Cardiac septum (tissue), 1 donor: ENCODE measurements at regions of chr5 and their contacts with region 1.

Region 1: DNA sequence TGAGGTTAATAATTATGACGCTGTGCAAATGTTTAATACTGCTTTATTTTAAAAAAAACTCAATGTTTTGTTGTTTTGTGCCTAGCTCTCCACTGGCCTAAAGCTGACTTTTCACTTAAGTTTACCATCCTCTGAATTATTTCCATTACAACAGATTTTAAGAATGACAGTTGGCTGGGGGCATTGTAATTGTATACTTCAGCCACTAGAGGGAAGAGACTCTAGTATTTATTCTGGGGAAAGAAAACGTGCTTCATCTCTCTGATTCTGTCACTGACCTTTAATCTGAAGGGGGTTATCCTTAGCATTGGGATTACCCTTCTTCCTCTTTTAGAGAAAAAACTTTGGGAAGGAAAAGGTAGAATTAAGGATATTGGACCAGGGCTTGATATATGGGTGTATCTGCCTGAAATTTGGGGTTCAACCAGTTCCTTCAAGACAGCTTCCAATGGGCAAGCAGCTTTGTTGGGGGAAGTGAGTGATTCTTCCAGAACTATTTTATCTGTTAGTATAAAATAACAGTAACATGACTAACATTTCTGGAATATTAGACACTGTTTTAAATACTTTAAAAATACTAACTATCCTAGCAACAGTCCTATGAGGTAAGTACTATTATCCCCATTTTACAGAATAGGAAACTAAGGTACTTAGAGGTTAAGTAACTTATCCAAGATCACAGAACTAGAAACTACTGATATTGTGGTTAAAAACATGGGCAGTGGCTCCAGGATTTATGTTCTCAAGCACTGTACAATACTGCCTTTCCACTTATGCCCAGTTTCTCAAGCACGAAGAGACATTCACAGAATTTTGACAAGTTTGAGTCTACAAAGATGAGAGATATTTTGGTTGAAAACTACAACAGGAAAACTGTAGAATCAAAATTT is 208.4 kb downstream of the CD180 start:
- DNase-seq: no peak

Region 2: DNA sequence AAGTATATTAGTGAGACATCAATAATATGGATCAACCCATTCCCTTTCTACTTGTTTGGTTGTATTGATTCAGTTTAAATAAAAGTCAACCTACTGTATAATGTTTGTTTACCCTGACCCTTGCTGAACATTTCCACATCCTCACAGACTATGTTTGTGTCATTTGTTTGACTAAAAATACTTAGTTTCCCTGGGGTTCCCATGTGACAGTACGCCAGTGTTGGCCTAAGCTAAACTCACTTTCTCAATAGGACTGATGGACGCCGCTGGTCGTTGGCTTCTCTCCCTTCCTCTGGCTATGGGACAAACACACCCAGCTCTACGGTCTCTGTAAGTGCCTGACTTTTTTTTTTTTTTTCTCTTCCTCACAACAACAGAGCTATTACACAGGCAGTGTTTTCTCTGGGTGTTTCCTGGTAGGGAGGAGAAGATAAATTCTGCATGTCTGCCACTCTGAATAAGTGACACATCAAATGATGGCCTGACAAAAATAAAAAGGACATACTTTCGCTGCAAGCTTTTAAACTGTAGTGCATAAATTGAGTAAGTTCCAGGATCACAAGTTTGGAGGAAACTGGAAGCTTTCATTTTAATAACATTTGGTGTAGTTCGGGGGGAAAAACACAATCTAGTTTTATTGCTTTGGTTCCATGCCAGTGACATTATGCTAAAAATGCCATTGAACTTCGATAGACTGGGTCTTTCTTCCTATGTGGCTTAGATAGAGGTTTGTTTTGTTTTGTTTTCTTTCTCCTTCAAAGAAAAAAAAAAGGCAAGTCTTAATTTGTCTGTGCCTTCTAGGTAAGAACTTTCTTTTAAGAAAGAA is 107.4 kb after region 1 on chr5:
- intact Hi-C with region 1: loop called (anchors 5 kb)
- DNase-seq: peak; percentile 81

Region 3: DNA sequence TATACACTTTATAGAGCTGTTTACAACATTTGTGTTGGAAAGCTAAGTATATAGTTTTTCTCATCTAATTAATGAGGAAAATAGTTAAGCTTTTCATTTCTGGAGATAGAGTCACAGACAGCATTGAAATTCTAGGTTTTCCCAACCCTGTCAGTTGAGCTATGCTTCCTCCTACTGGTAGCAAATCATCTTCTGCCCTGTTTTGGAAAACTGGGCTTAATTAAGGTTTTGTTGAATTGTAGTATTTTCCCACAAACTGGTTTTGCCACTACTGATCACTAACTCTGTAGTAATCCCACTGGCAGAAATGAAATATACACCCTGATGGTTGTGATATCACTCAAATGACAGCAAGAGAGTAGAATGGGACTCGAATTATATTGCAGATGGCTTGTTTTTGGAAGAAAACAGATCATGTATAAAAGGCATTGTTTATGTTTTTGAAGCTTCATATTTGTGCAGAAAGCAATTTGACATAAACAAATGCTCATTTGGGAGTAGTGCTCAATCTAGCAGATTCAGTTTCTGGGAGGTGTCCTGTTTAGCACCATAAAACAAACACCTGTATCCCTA is 161.8 kb after region 1 on chr5:
- intact Hi-C with region 1: loop called (anchors 5 kb)
- DNase-seq: no peak

Region 4: GRCh38 chr5:67209142-67209771 is 221.1 kb after region 1 on chr5:
- intact Hi-C with region 1: loop called (anchors 10 kb)
- DNase-seq: no peak

Region 5: GRCh38 chr5:67375608-67376007 is 387.4 kb after region 1 on chr5:
- intact Hi-C with region 1: no loop called
- DNase-seq: no peak